Activated CD4-positive, alpha-beta T cell treated with anti-CD3 and anti-CD28 coated beads for 36 hours (primary cell): ENCODE measurements at regions of chr5 and their contacts with region 1.

Region 1: GRCh38 chr5:54229041-54229780 is 81.2 kb downstream of the ARL15 start:
- DNase-seq: peak; percentile 86
- ATAC-seq: peak; percentile 90
- H3K4me3 Mint-ChIP-seq: no peak overlapping the region
- H3K27ac Mint-ChIP-seq: no peak overlapping the region
- H3K4me1 Mint-ChIP-seq: peaks cover 6% of the 10 kb centered on the region
- H3K27me3 Mint-ChIP-seq: no peaks in the 10 kb centered on the region

Region 2: GRCh38 chr5:53170748-53171349 is 1058.4 kb before region 1 on chr5:
- CTCF ChIA-PET with region 1: interaction called, 12 read pairs
- POLR2A ChIA-PET with region 1: no interaction called
- intact Hi-C with region 1: loop called (anchors 1 to 5 kb)
- DNase-seq: peak; percentile 16
- ATAC-seq: no peak
- H3K4me3 Mint-ChIP-seq: no peak overlapping the region
- H3K27ac Mint-ChIP-seq: no peak overlapping the region
- H3K4me1 Mint-ChIP-seq: no peaks in the 10 kb centered on the region
- H3K27me3 Mint-ChIP-seq: peaks cover 7% of the 10 kb centered on the region

Region 3: GRCh38 chr5:54171645-54172384 is 57.4 kb before region 1 on chr5:
- CTCF ChIA-PET with region 1: no interaction called
- POLR2A ChIA-PET with region 1: no interaction called
- intact Hi-C with region 1: no loop called
- DNase-seq: no peak
- ATAC-seq: no peak
- H3K4me3 Mint-ChIP-seq: no peak overlapping the region
- H3K27ac Mint-ChIP-seq: no peak overlapping the region
- H3K4me1 Mint-ChIP-seq: no peaks in the 10 kb centered on the region
- H3K27me3 Mint-ChIP-seq: no peaks in the 10 kb centered on the region

Region 4: GRCh38 chr5:54691656-54692055 is 462.4 kb after region 1 on chr5:
- CTCF ChIA-PET with region 1: no interaction called
- POLR2A ChIA-PET with region 1: no interaction called
- intact Hi-C with region 1: no loop called
- DNase-seq: no peak
- ATAC-seq: no peak
- H3K4me3 Mint-ChIP-seq: no peak overlapping the region
- H3K27ac Mint-ChIP-seq: no peak overlapping the region
- H3K4me1 Mint-ChIP-seq: no peaks in the 10 kb centered on the region
- H3K27me3 Mint-ChIP-seq: no peaks in the 10 kb centered on the region